Heart left ventricle (tissue), 16 donors: ENCODE measurements at regions of chr5 and their contacts with region 1.

Region 1: DNA sequence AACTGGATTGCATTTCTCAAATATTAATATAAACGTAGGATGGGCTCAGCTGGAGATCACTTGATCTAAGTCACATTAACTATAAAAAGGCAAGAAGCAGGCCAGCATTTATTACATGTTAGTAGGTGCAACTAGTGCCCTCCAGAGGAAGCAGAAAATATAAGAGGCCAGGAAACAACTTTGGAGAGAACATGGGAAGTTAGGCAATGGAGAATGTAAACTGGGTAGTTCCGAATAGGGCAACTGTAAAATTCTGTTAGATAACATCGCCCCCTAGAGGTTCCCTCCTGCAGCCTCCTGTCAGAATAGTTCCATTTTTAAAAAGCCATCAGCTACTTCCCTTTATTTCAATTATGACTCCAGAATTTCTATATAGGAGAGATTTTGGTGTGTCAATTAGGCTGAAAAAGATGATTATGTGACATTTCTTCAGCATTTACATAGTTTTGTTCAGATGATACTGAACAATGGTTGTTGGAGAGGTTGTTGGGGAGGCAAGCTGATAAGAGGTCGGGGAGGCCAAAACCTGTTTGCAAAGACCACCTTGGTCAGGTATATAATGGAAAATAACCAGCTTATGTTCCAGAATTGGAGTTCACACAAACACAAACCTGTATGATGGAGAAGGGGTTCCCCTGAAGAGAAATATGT is 22.4 kb downstream of the CCL28 start:
- DNase-seq: peak in 2 of 5 donors; percentile 31 to 44
- ATAC-seq: peak in 3 of 4 donors; percentile 86 to 92 (median 92)
- H3K4me3 ChIP-seq: no peak overlapping the region
- H3K27ac ChIP-seq: no peak overlapping the region
- H3K4me1 ChIP-seq: peaks cover 0 to 4% (median 0%) of the 10 kb centered on the region in 12 donors
- H3K27me3 ChIP-seq: peaks cover 0 to 2% (median 0%) of the 10 kb centered on the region in 9 donors
- CTCF ChIP-seq: peak; percentile 70 to 89 (median 80)
- POLR2A ChIP-seq: no peak

Region 2: DNA sequence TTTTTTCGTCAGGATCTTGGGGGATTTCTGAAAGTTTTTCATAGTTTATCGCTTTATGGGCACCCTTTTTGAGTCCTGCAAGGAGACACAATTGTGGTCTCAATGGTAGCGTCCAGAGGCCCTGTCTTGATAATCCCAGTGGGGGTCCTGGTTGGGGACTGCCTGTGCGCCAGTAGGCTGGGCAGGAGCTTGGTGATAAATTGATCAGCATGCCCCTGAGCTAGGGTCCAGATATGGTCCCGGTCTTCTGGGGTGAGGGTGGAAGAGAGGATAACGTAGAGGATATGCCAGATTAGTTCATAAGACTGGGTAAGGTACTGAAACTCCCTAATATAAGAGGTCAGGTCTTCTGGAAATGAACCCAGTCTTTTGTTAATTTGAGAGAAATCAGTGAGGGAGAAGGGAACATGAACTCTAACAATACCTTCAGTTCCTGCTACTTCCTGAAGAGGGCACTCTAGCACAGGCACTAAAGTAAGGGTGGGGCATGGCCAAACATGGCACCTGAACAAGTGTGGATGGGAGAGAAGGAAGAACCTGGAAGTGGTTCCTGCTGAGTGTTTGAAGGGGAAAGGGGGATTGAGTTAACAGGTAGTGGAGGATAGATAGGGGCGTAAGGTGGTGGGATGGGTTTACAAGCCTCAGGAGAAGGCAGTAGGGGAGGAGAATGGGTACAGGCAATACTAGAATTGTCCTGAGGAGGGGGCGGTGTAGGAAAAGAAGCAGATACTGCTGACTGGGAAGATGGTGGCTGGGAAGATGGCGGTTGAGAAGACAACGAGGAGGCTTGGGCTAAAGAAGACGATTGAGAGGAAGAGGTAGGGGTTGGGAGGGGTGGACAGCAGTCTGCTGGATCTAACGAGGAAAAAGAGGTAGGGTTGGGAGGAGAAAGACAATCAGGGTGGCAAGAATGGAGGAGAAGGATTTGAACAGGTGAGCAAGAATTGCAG is 315.9 kb before region 1 on chr5:
- intact Hi-C with region 1: loop called in 1 of 10 experiments (anchors 10 kb)
- DNase-seq: no peak
- ATAC-seq: peak in 1 of 4 donors; percentile 37
- H3K4me3 ChIP-seq: no peak overlapping the region
- H3K27ac ChIP-seq: no peak overlapping the region
- H3K4me1 ChIP-seq: peaks cover 0 to 40% (median 18%) of the 10 kb centered on the region in 12 donors
- H3K27me3 ChIP-seq: no peaks in the 10 kb centered on the region
- CTCF ChIP-seq: peak; percentile 36 to 69 (median 52)
- POLR2A ChIP-seq: no peak

Region 3: DNA sequence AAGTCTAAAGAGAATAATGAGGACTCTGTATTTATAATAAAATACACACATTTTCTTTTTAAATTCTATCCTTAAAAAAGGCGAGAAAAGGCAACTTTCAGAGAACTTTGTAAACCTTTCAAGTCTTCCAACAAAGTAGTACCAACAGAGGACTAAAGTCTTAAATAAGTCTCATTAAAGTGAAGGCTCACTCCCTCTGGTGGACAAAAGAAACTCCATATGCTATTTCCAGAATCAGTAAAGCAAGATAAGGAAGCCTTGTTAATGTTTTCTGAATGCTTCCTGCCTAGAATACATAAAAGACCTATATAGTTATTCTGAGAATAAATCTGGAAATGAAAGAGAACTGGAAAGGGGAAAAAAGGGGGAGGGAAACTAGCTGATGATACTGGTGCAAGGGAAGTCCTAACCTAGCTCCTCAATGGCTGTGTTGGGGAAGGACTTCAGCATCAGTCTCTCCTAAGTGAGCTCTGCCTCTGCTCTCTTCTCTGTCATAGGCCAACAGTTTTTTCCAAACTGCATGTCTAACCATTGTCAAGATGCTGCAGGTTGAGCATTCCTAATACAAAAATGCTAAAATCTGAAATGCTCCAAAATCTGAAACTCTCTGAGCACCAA is 83.7 kb before region 1 on chr5:
- intact Hi-C with region 1: loop called in 1 of 10 experiments (anchors 5 kb)
- DNase-seq: no peak
- ATAC-seq: peak in 2 of 4 donors; percentile 42 to 73
- H3K4me3 ChIP-seq: no peak overlapping the region
- H3K27ac ChIP-seq: no peak overlapping the region
- H3K4me1 ChIP-seq: peaks cover 0 to 55% (median 19%) of the 10 kb centered on the region in 12 donors
- H3K27me3 ChIP-seq: no peaks in the 10 kb centered on the region
- CTCF ChIP-seq: peak; percentile 45 to 77 (median 61)
- POLR2A ChIP-seq: no peak

Region 4: GRCh38 chr5:43367909-43368648 is 21.7 kb before region 1 on chr5:
- intact Hi-C with region 1: no loop called
- DNase-seq: no peak
- ATAC-seq: no peak
- H3K4me3 ChIP-seq: no peak overlapping the region
- H3K27ac ChIP-seq: no peak overlapping the region
- H3K4me1 ChIP-seq: no peaks in the 10 kb centered on the region
- H3K27me3 ChIP-seq: peaks cover 0 to 6% (median 0%) of the 10 kb centered on the region in 9 donors
- CTCF ChIP-seq: no peak
- POLR2A ChIP-seq: no peak

Region 5: DNA sequence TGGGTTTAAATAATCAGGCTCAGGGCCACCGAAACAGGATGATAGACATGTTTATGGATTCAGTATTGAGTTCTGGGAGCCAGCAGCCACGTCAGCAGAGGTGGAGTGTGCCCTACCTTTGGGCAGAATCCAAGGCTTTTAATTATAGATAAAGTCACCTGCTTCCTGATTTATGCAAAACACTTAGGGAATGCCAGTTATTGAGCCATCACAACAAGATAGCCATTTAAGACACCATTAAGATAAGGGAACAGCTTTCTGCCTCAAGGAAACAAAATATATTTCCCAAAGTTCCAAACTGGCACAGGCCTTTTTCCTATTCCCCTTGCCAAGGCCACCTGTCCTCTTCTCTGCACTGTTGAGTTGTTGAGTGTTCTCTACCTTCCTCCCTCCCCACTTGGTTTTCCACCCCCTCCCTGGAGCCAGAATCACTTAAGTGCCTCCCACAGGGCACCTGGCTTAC is 20.0 kb after region 1 on chr5:
- intact Hi-C with region 1: no loop called
- DNase-seq: no peak
- ATAC-seq: no peak
- H3K4me3 ChIP-seq: no peak overlapping the region
- H3K27ac ChIP-seq: no peak overlapping the region
- H3K4me1 ChIP-seq: no peaks in the 10 kb centered on the region
- H3K27me3 ChIP-seq: no peaks in the 10 kb centered on the region
- CTCF ChIP-seq: no peak
- POLR2A ChIP-seq: no peak

Region 6: DNA sequence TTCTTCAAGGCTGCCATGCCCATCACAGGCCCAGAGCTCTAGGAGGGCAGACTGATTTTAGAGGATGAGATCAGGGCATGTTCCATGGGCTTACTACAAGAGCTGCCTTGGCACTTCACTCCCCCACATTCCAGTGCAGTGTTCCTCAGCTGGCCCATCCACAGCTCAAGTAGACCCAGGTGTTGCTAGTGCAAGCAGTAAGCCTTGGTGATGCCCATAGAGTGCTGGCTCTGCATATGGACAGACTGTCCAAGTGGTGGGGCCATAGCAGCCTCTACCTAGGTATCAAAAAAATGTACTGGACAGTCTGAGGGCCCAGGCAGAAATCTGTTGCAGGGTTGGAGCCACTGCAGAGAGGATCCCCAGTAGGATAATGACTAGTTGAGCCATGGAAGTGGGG is 632.8 kb after region 1 on chr5:
- intact Hi-C with region 1: no loop called
- DNase-seq: no peak
- ATAC-seq: no peak
- H3K4me3 ChIP-seq: no peak overlapping the region
- H3K27ac ChIP-seq: no peak overlapping the region
- H3K4me1 ChIP-seq: no peaks in the 10 kb centered on the region
- H3K27me3 ChIP-seq: no peaks in the 10 kb centered on the region
- CTCF ChIP-seq: no peak
- POLR2A ChIP-seq: no peak